Endothelial cell of umbilical vein (primary cell): ENCODE measurements at regions of chr4 and their contacts with region 1.

Region 1: GRCh38 chr4:173025131-173025530 is 143.5 kb upstream of the GALNT7 start:
- DNase-seq: peak; percentile 38
- H3K4me3 ChIP-seq: no peak overlapping the region
- H3K27ac ChIP-seq: no peak overlapping the region
- H3K4me1 ChIP-seq: no peaks in the 10 kb centered on the region
- H3K27me3 ChIP-seq: no peaks in the 10 kb centered on the region
- CTCF ChIP-seq: peak; percentile 33 to 41
- POLR2A ChIP-seq: no peak

Region 2: DNA sequence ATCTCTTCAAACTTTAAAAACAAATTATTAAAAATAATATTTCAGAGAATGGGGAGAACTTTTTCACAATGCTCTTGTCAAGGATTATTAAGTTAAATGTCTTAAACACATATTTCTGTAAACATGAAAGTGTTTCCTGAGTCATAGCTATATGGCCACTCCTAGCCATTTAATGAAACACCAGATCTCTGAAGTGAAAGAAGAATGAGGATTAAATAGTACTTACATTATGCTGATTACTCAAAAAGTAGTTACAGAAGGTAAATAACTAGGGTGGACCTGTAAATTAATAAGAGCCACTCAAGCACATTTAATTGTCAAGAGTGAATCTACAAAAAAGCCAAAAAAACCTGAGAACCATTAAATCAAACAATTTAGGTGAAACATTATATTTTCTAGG is 85.9 kb after region 1 on chr4:
- CTCF ChIA-PET with region 1: no interaction called
- POLR2A ChIA-PET with region 1: no interaction called
- dilution Hi-C with region 1: no loop called
- intact Hi-C with region 1: loop called (anchors 5 kb)
- DNase-seq: no peak
- H3K4me3 ChIP-seq: no peak overlapping the region
- H3K27ac ChIP-seq: no peak overlapping the region
- H3K4me1 ChIP-seq: peaks cover 12% of the 10 kb centered on the region
- H3K27me3 ChIP-seq: no peaks in the 10 kb centered on the region
- CTCF ChIP-seq: no peak
- POLR2A ChIP-seq: no peak

Region 3: GRCh38 chr4:173231916-173232315 is 206.8 kb after region 1 on chr4:
- CTCF ChIA-PET with region 1: interaction called, 4 read pairs
- POLR2A ChIA-PET with region 1: no interaction called
- dilution Hi-C with region 1: no loop called
- intact Hi-C with region 1: loop called (anchors 1 kb)
- DNase-seq: peak; percentile 79
- H3K4me3 ChIP-seq: no peak overlapping the region
- H3K27ac ChIP-seq: peak overlapping the region; percentile 6
- H3K4me1 ChIP-seq: peaks cover 9% of the 10 kb centered on the region
- H3K27me3 ChIP-seq: no peaks in the 10 kb centered on the region
- CTCF ChIP-seq: peak; percentile 10 to 39
- POLR2A ChIP-seq: no peak

Region 4: GRCh38 chr4:173413036-173413435 is 387.9 kb after region 1 on chr4:
- CTCF ChIA-PET with region 1: no interaction called
- POLR2A ChIA-PET with region 1: no interaction called
- dilution Hi-C with region 1: no loop called
- intact Hi-C with region 1: no loop called
- DNase-seq: peak; percentile 68
- H3K4me3 ChIP-seq: no peak overlapping the region
- H3K27ac ChIP-seq: no peak overlapping the region
- H3K4me1 ChIP-seq: peaks cover 24% of the 10 kb centered on the region
- H3K27me3 ChIP-seq: no peaks in the 10 kb centered on the region
- CTCF ChIP-seq: no peak
- POLR2A ChIP-seq: no peak